Common myeloid progenitor, CD34-positive (primary cell): ENCODE measurements at regions of chr3 and their contacts with region 1.

Region 1: GRCh38 chr3:48432411-48433372 is 2.8 kb upstream of the PLXNB1 start:
- DNase-seq: peak; percentile 37 to 53 (median 53)
- H3K4me3 ChIP-seq: no peak overlapping the region
- H3K27ac ChIP-seq: peak overlapping the region in 1 of 2 experiments; percentile 4
- H3K4me1 ChIP-seq: peaks cover 0 to 23% (median 20%) of the 10 kb centered on the region in 4 experiments
- H3K27me3 ChIP-seq: peaks cover 0 to 9% (median 3%) of the 10 kb centered on the region in 5 experiments

Region 2: DNA sequence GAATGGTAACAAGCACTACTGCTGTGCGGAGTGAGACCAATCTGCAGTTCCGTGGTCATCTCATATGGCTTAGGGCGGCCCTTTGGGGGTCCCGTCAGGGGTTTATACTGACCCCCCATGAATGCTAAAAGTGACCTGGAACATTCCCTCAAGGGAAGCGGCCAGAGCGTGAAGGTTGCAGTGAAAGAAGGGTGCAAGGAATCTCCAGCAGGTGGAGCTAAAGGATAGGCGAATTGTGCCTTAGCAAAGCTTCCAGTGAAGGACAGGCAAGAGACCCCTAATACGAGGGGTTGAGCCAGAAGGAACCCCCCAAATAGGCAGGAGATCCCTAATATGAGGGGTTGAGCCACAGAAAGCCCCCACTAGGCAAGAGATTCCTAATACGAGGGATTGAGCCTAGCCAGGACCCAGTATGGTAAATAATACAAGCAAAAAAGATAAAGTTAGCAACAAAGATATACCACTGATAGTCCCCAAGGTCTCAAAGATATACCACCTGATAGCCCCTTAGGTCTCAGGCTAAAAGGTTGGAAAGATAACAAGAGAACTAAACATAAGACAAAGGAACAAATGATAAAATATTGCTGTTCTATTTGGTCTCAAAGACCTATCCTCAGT is 159.0 kb before region 1 on chr3:
- CTCF ChIA-PET with region 1: interaction called, 164 read pairs
- POLR2A ChIA-PET with region 1: interaction called, 3 read pairs
- DNase-seq: peak; percentile 69 to 82 (median 77)
- H3K4me3 ChIP-seq: no peak overlapping the region
- H3K27ac ChIP-seq: no peak overlapping the region
- H3K4me1 ChIP-seq: no peaks in the 10 kb centered on the region
- H3K27me3 ChIP-seq: no peaks in the 10 kb centered on the region